Activated CD8-positive, alpha-beta T cell treated with anti-CD3 and anti-CD28 coated beads for 36 hours (primary cell): ENCODE measurements at regions of chr10 and their contacts with region 1.

Region 1: GRCh38 chr10:28381903-28382347 is 79.1 kb upstream of the MPP7 start:
- DNase-seq: peak; percentile 95
- ATAC-seq: peak; percentile 95
- H3K4me3 Mint-ChIP-seq: no peak overlapping the region
- H3K27ac Mint-ChIP-seq: no peak overlapping the region
- H3K4me1 Mint-ChIP-seq: peaks cover 28% of the 10 kb centered on the region
- H3K27me3 Mint-ChIP-seq: no peaks in the 10 kb centered on the region
- CTCF ChIP-seq: peak; percentile 92

Region 2: DNA sequence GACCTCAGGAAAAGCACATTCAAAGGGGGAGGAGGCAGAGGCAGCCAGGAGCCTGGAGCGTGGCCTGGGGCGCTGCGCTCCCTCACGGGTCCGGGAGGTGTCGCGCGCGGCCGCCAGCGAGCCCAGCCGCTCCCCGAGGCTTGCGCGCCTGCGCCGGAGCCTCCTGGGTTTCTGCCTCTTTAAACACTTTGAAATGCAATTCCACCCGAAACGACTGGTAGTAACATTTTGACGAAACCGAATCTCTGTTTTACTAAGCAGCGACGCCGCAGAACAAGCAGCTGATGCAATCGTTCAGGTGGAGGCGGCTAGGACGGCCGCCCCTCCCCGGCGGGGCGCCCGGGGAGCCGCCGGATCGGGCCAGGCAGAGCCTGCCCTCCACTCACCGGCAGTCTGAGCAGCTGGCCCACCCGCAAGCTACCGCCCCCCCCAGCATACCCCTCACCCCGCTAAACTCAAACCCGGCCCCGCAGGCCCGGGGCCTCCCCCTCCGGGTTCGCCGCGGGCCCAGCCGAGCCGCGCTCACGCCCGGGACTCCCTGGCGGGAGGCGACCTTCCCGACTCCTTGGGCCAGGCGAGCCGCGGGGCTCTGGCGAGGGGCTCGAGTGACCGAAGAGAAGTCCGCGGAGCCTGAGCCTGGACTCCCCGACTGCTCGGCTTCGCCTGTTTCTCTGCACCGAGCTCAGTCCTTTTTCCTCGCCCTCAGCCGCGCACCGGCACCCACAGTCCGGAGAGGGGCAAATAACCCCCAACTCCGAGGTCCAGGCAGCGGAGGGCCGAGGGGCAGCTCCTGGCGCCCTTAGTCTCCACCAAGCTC is 639.5 kb before region 1 on chr10:
- CTCF ChIA-PET with region 1: interaction called, 16 read pairs
- POLR2A ChIA-PET with region 1: no interaction called
- intact Hi-C with region 1: loop called (anchors 10 kb)
- DNase-seq: peak; percentile 90
- ATAC-seq: peak; percentile 86
- H3K4me3 Mint-ChIP-seq: peak overlapping the region; percentile 78
- H3K27ac Mint-ChIP-seq: peak overlapping the region; percentile 71
- H3K4me1 Mint-ChIP-seq: peaks cover 36% of the 10 kb centered on the region
- H3K27me3 Mint-ChIP-seq: peaks cover 59% of the 10 kb centered on the region
- CTCF ChIP-seq: peak; percentile 86

Region 3: GRCh38 chr10:28263136-28263820 is 118.6 kb before region 1 on chr10:
- CTCF ChIA-PET with region 1: interaction called, 11 read pairs
- POLR2A ChIA-PET with region 1: interaction called, 4 read pairs
- intact Hi-C with region 1: no loop called
- DNase-seq: no peak
- ATAC-seq: no peak
- H3K4me3 Mint-ChIP-seq: no peak overlapping the region
- H3K27ac Mint-ChIP-seq: no peak overlapping the region
- H3K4me1 Mint-ChIP-seq: peaks cover 14% of the 10 kb centered on the region
- H3K27me3 Mint-ChIP-seq: no peaks in the 10 kb centered on the region
- CTCF ChIP-seq: no peak

Region 4: GRCh38 chr10:28302638-28303488 is 79.1 kb before region 1 on chr10 and contains the start of gene MPP7:
- CTCF ChIA-PET with region 1: interaction called, 166 read pairs
- POLR2A ChIA-PET with region 1: interaction called, 7 read pairs
- intact Hi-C with region 1: loop called (anchors 2 kb)
- DNase-seq: peak; percentile 97
- ATAC-seq: peak; percentile 94
- H3K4me3 Mint-ChIP-seq: peak within 1 kb of the TSS; percentile 92
- H3K27ac Mint-ChIP-seq: peak within 1 kb of the TSS; percentile 81
- H3K4me1 Mint-ChIP-seq: peaks cover 48% of the 10 kb centered on the region
- H3K27me3 Mint-ChIP-seq: no peaks in the 10 kb centered on the region
- CTCF ChIP-seq: peak; percentile 57
- total RNA-seq, gene MPP7: 12.6 to 14.3 TPM

Region 5: GRCh38 chr10:28334296-28334695 is 47.6 kb before region 1 on chr10:
- CTCF ChIA-PET with region 1: interaction called, 102 read pairs
- POLR2A ChIA-PET with region 1: interaction called, 7 read pairs
- intact Hi-C with region 1: loop called (anchors 5 kb)
- DNase-seq: peak; percentile 62
- ATAC-seq: peak; percentile 55
- H3K4me3 Mint-ChIP-seq: peak overlapping the region; percentile 86
- H3K27ac Mint-ChIP-seq: peak overlapping the region; percentile 99
- H3K4me1 Mint-ChIP-seq: peaks cover 59% of the 10 kb centered on the region
- H3K27me3 Mint-ChIP-seq: no peaks in the 10 kb centered on the region
- CTCF ChIP-seq: no peak

Region 6: DNA sequence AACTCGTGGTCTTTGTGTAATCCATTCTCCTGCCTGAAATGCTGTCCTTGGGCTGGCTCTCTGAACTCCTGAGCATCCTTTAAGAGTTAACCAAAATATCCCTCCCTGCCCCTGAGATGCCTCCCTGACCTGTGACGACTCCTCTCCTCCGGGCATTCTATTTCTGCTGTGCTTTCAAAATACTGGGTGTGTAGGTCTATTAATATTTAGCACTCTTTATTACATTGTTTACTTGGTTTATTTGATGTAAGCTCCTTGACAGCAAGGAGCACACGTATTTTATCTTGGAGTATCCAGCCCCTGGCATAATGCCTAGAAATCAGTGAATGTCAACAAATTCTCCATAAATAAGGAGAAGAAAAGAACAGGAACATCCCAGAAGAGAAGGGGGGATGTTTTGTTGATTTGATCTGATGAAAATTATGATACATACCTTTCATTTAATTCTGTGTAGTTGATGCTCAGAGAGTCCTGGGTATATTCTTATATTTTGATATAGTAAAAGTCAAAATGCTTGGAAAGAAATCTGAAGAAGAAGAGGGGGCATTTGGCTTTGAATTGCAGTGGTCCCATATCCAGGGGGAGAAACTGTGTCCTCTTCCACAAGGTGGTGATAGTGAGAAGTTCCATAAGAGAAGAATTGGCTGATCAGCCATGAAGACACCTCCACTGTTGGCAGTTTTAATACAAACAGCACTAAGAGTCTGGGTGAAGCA is 28.7 kb after region 1 on chr10:
- CTCF ChIA-PET with region 1: interaction called, 10 read pairs
- POLR2A ChIA-PET with region 1: no interaction called
- intact Hi-C with region 1: no loop called
- DNase-seq: no peak
- ATAC-seq: no peak
- H3K4me3 Mint-ChIP-seq: no peak overlapping the region
- H3K27ac Mint-ChIP-seq: no peak overlapping the region
- H3K4me1 Mint-ChIP-seq: peaks cover 12% of the 10 kb centered on the region
- H3K27me3 Mint-ChIP-seq: peaks cover 8% of the 10 kb centered on the region
- CTCF ChIP-seq: no peak

Region 7: GRCh38 chr10:28754930-28755718 is 373.2 kb after region 1 on chr10:
- CTCF ChIA-PET with region 1: no interaction called
- POLR2A ChIA-PET with region 1: no interaction called
- intact Hi-C with region 1: no loop called
- DNase-seq: no peak
- ATAC-seq: no peak
- H3K4me3 Mint-ChIP-seq: no peak overlapping the region
- H3K27ac Mint-ChIP-seq: no peak overlapping the region
- H3K4me1 Mint-ChIP-seq: no peaks in the 10 kb centered on the region
- H3K27me3 Mint-ChIP-seq: peaks cover 19% of the 10 kb centered on the region
- CTCF ChIP-seq: no peak